ENCODE measurements at regions of chr6 and their contacts with region 1.

Region 1: DNA sequence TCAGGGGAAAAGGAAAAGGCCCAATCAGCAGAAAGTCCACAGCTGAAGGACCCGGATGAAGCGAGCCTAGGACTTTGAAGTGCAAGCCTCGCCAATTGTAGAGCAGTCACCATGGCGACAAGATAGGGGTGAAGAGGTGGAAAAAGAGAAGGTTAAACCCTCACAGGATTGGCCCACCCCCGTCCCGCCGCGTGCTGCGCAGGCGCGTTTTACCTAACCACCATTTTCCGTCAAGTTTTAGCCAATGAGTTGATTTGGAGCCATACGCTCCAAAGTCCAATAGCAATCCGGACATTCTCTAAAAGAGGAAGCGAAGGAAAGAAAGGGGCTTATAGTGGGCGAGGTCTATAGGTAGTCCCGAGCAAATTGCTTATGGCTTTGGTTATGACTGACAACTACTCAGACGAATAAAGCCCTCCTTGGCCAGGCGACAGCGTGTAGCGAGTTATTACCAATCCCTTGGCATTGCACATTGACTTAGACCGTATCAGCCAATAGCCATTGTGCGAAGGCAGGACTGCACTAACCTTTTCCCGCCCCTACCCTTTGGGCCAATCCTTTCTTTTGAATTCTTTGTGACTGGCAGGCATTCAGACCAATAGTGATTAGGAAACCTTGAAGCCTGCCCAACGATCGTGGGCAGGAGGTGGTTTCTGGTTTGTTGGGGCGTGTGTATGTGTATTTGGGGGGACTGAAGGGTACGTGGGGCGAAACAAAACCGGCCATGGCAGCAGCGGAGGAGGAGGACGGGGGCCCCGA is at the start of gene RNF5:
- DNase-seq: peak; percentile 63
- ATAC-seq: peak; percentile 82
- H3K4me3 Mint-ChIP-seq: peak within 1 kb of the TSS; percentile 96
- H3K27ac Mint-ChIP-seq: peak within 1 kb of the TSS; percentile 99
- H3K4me1 Mint-ChIP-seq: peaks cover 54% of the 10 kb centered on the region
- H3K27me3 Mint-ChIP-seq: no peaks in the 10 kb centered on the region
- CTCF ChIP-seq: no peak
- total RNA-seq, gene RNF5: 39.7 and 41.8 TPM in 2 replicates

Region 2: GRCh38 chr6:32190054-32190851 is 12.3 kb after region 1 on chr6 and contains the start of gene PBX2:
- CTCF ChIA-PET with region 1: interaction called, 6 read pairs
- POLR2A ChIA-PET with region 1: interaction called, 102 read pairs
- intact Hi-C with region 1: loop called (anchors 1 kb)
- DNase-seq: peak; percentile 61
- ATAC-seq: peak; percentile 86
- H3K4me3 Mint-ChIP-seq: peak within 1 kb of the TSS; percentile 91
- H3K27ac Mint-ChIP-seq: peak within 1 kb of the TSS; percentile 96
- H3K4me1 Mint-ChIP-seq: peaks cover 85% of the 10 kb centered on the region
- H3K27me3 Mint-ChIP-seq: no peaks in the 10 kb centered on the region
- CTCF ChIP-seq: no peak
- total RNA-seq, gene PBX2: 134 and 153 TPM in 2 replicates

Region 3: GRCh38 chr6:32288426-32288825 is 110.5 kb after region 1 on chr6:
- CTCF ChIA-PET with region 1: no interaction called
- POLR2A ChIA-PET with region 1: no interaction called
- intact Hi-C with region 1: no loop called
- DNase-seq: no peak
- ATAC-seq: no peak
- H3K4me3 Mint-ChIP-seq: no peak overlapping the region
- H3K27ac Mint-ChIP-seq: peak overlapping the region; percentile 43
- H3K4me1 Mint-ChIP-seq: peaks cover 42% of the 10 kb centered on the region
- H3K27me3 Mint-ChIP-seq: no peaks in the 10 kb centered on the region
- CTCF ChIP-seq: no peak

Measured in activated B cell treated with CpG ODN at 0.5 μM for 24 hours (primary cell).